ENCODE measurements at regions of chrX and their contacts with region 1.

Region 1: GRCh38 chrX:53654376-53654775 is 32.1 kb downstream of the HUWE1 start:
- DNase-seq: no peak
- H3K4me3 Mint-ChIP-seq: no peak overlapping the region
- H3K27ac Mint-ChIP-seq: no peak overlapping the region
- H3K4me1 Mint-ChIP-seq: peaks cover 34% of the 10 kb centered on the region
- H3K27me3 Mint-ChIP-seq: no peaks in the 10 kb centered on the region

Region 2: GRCh38 chrX:53666171-53666570 is 11.8 kb after region 1 on chrX:
- intact Hi-C with region 1: loop called (anchors 2 kb)
- DNase-seq: no peak
- H3K4me3 Mint-ChIP-seq: no peak overlapping the region
- H3K27ac Mint-ChIP-seq: no peak overlapping the region
- H3K4me1 Mint-ChIP-seq: peaks cover 25% of the 10 kb centered on the region
- H3K27me3 Mint-ChIP-seq: no peaks in the 10 kb centered on the region

Measured in activated T-helper 1 cell treated with anti-CD3 and anti-CD28 coated beads, Interleukin-12 subunit alpha, Interleukin-12 subunit beta, Interleukin-2, Interleukin-4 antibody, amounts not matched to agents 30 ng/mL and 10 ng/mL and 1 ng/mL, durations not matched to agents 14 hours and 24 hours and 36 hours (primary cell).